ENCODE measurements at regions of chr11 and their contacts with region 1.

Region 1: GRCh38 chr11:73597956-73598718 is at the start of gene FAM168A:
- DNase-seq: peak; percentile 82 to 92 (median 89)
- ATAC-seq: peak; percentile 96
- H3K4me3 ChIP-seq: peak within 1 kb of the TSS; percentile 71
- H3K4me3 Mint-ChIP-seq: peak within 1 kb of the TSS; percentile 90 to 97 (median 95)
- H3K27ac ChIP-seq: peak within 1 kb of the TSS; percentile 87
- H3K27ac Mint-ChIP-seq: peak within 1 kb of the TSS; percentile 91 to 97 (median 95)
- H3K4me1 ChIP-seq: peaks cover 12 to 13% of the 10 kb centered on the region in 2 donors
- H3K4me1 Mint-ChIP-seq: peaks cover 19 to 48% (median 46%) of the 10 kb centered on the region in 7 donors
- H3K27me3 ChIP-seq: no peaks in the 10 kb centered on the region
- H3K27me3 Mint-ChIP-seq: peaks cover 0 to 2% (median 0%) of the 10 kb centered on the region in 5 donors
- total RNA-seq, gene FAM168A: 18.4 to 33.0 (median 25.2) TPM

Region 2: GRCh38 chr11:72793425-72794367 is 804.4 kb before region 1 on chr11 and contains the start of gene STARD10:
- CTCF ChIA-PET with region 1: no interaction called
- POLR2A ChIA-PET with region 1: no interaction called
- intact Hi-C with region 1: loop called in 1 of 2 experiments (anchors 5 kb)
- DNase-seq: peak; percentile 90 to 97 (median 96)
- ATAC-seq: peak; percentile 97
- H3K4me3 ChIP-seq: peak within 1 kb of the TSS; percentile 89
- H3K4me3 Mint-ChIP-seq: peak within 1 kb of the TSS; percentile 78 to 100 (median 98)
- H3K27ac ChIP-seq: peak within 1 kb of the TSS; percentile 99
- H3K27ac Mint-ChIP-seq: peak within 1 kb of the TSS; percentile 99 to 100 (median 99)
- H3K4me1 ChIP-seq: peaks cover 16 to 18% of the 10 kb centered on the region in 2 donors
- H3K4me1 Mint-ChIP-seq: peaks cover 19 to 35% (median 28%) of the 10 kb centered on the region in 7 donors
- H3K27me3 ChIP-seq: no peaks in the 10 kb centered on the region
- H3K27me3 Mint-ChIP-seq: no peaks in the 10 kb centered on the region
- total RNA-seq, gene STARD10: 10.9 to 26.1 (median 16.4) TPM

Region 3: GRCh38 chr11:73307323-73308002 is 290.7 kb before region 1 on chr11:
- CTCF ChIA-PET with region 1: interaction called, 4 read pairs
- POLR2A ChIA-PET with region 1: no interaction called
- intact Hi-C with region 1: loop called in 1 of 2 experiments (anchors 5 kb)
- DNase-seq: peak; percentile 75 to 90 (median 86)
- ATAC-seq: peak; percentile 83
- H3K4me3 ChIP-seq: peak overlapping the region; percentile 63
- H3K4me3 Mint-ChIP-seq: peak overlapping the region; percentile 83 to 95 (median 91)
- H3K27ac ChIP-seq: no peak overlapping the region
- H3K27ac Mint-ChIP-seq: peak overlapping the region in 5 of 9 donors; percentile 9 to 68 (median 31)
- H3K4me1 ChIP-seq: peaks cover 4 to 5% of the 10 kb centered on the region in 2 donors
- H3K4me1 Mint-ChIP-seq: peaks cover 8 to 13% (median 11%) of the 10 kb centered on the region in 7 donors
- H3K27me3 ChIP-seq: peaks cover 0 to 4% of the 10 kb centered on the region in 2 donors
- H3K27me3 Mint-ChIP-seq: peaks cover 14 to 55% (median 21%) of the 10 kb centered on the region in 5 donors

Region 4: GRCh38 chr11:73478738-73479347 is 119.3 kb before region 1 on chr11:
- CTCF ChIA-PET with region 1: no interaction called
- POLR2A ChIA-PET with region 1: no interaction called
- intact Hi-C with region 1: loop called in 1 of 2 experiments (anchors 5 kb)
- DNase-seq: no peak
- ATAC-seq: no peak
- H3K4me3 ChIP-seq: no peak overlapping the region
- H3K4me3 Mint-ChIP-seq: no peak overlapping the region
- H3K27ac ChIP-seq: no peak overlapping the region
- H3K27ac Mint-ChIP-seq: peak overlapping the region in 1 of 9 donors; percentile 11
- H3K4me1 ChIP-seq: no peaks in the 10 kb centered on the region
- H3K4me1 Mint-ChIP-seq: peaks cover 0 to 22% (median 11%) of the 10 kb centered on the region in 7 donors
- H3K27me3 ChIP-seq: no peaks in the 10 kb centered on the region
- H3K27me3 Mint-ChIP-seq: peaks cover 0 to 2% (median 0%) of the 10 kb centered on the region in 5 donors

Region 5: GRCh38 chr11:73671701-73672100 is 73.6 kb after region 1 on chr11:
- CTCF ChIA-PET with region 1: no interaction called
- POLR2A ChIA-PET with region 1: no interaction called
- intact Hi-C with region 1: no loop called
- DNase-seq: no peak
- ATAC-seq: no peak
- H3K4me3 ChIP-seq: no peak overlapping the region
- H3K4me3 Mint-ChIP-seq: no peak overlapping the region
- H3K27ac ChIP-seq: no peak overlapping the region
- H3K27ac Mint-ChIP-seq: peak overlapping the region in 2 of 9 donors; percentile 31 to 32
- H3K4me1 ChIP-seq: no peaks in the 10 kb centered on the region
- H3K4me1 Mint-ChIP-seq: peaks cover 0 to 4% (median 0%) of the 10 kb centered on the region in 7 donors
- H3K27me3 ChIP-seq: no peaks in the 10 kb centered on the region
- H3K27me3 Mint-ChIP-seq: no peaks in the 10 kb centered on the region

Region 6: GRCh38 chr11:73760679-73761402 is 162.7 kb after region 1 on chr11 and contains the start of gene RAB6A:
- CTCF ChIA-PET with region 1: no interaction called
- POLR2A ChIA-PET with region 1: interaction called, 8 read pairs
- intact Hi-C with region 1: loop called (anchors 1 kb)
- DNase-seq: peak; percentile 94 to 100 (median 100)
- ATAC-seq: peak; percentile 94
- H3K4me3 ChIP-seq: peak within 1 kb of the TSS; percentile 87
- H3K4me3 Mint-ChIP-seq: peak within 1 kb of the TSS; percentile 89 to 98 (median 94)
- H3K27ac ChIP-seq: peak within 1 kb of the TSS; percentile 89
- H3K27ac Mint-ChIP-seq: peak within 1 kb of the TSS; percentile 86 to 98 (median 92)
- H3K4me1 ChIP-seq: peaks cover 14 to 15% of the 10 kb centered on the region in 2 donors
- H3K4me1 Mint-ChIP-seq: peaks cover 19 to 40% (median 32%) of the 10 kb centered on the region in 7 donors
- H3K27me3 ChIP-seq: no peaks in the 10 kb centered on the region
- H3K27me3 Mint-ChIP-seq: peaks cover 0 to 5% (median 0%) of the 10 kb centered on the region in 5 donors
- total RNA-seq, gene RAB6A: 54.9 to 94.5 (median 80.0) TPM

Region 7: GRCh38 chr11:73876424-73877300 is 278.5 kb after region 1 on chr11 and contains the starts of genes COA4 and PAAF1:
- CTCF ChIA-PET with region 1: no interaction called
- POLR2A ChIA-PET with region 1: no interaction called
- intact Hi-C with region 1: loop called (anchors 1 kb)
- DNase-seq: peak; percentile 72 to 95 (median 94)
- ATAC-seq: peak; percentile 99
- H3K4me3 ChIP-seq: peak within 1 kb of the TSS; percentile 94
- H3K4me3 Mint-ChIP-seq: peak within 1 kb of the TSS; percentile 94 to 98 (median 96)
- H3K27ac ChIP-seq: peak within 1 kb of the TSS; percentile 88
- H3K27ac Mint-ChIP-seq: peak within 1 kb of the TSS; percentile 92 to 100 (median 97)
- H3K4me1 ChIP-seq: peaks cover 17 to 19% of the 10 kb centered on the region in 2 donors
- H3K4me1 Mint-ChIP-seq: peaks cover 20 to 55% (median 43%) of the 10 kb centered on the region in 7 donors
- H3K27me3 ChIP-seq: no peaks in the 10 kb centered on the region
- H3K27me3 Mint-ChIP-seq: no peaks in the 10 kb centered on the region
- total RNA-seq, gene COA4: 29.1 to 75.0 (median 58.2) TPM
- total RNA-seq, gene PAAF1: 12.4 to 22.7 (median 20.3) TPM

Measured in naive thymus-derived CD4-positive, alpha-beta T cell (primary cell).